Esophagus muscularis mucosa (tissue), 4 donors: ENCODE measurements at regions of chr2 and their contacts with region 1.

Region 1: DNA sequence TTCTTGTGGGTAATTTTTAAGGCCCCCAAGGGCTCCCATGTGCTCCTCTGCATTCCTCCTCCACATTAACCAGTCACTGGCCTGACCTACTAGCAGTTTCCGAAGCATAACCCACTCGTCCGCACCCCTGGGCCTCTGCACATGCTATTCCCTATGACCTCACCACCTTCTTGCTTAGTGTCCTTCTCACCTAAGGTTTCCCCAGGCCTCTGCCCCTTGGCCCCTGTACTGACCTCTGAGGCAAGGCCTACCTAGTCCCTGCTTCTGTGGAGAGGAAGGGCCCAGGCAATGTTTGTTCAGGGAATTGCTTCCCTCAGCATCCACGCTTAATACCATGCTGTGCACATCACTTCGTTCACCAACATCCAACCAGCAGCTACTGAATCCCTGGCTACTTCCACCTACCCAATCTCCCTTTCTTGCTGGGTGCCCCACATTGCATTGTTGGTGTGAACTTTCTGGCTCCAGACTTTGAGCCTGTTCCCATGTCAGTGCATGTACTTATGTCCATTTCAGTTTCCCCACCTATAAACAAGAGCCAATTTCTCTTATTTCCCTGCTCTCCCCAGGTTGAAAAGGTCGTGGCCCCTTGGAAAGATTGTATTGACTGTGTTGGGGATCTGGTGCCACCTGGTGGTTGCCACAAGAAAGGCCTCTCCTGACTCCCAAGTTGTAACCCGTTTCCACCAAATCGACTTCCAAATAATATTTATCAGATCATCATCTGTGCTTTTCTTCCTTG is 19.2 kb upstream of the TMEM177 start:
- DNase-seq: no peak
- H3K4me3 ChIP-seq: no peak overlapping the region
- H3K27ac ChIP-seq: no peak overlapping the region
- H3K4me1 ChIP-seq: no peaks in the 10 kb centered on the region
- H3K27me3 ChIP-seq: peaks cover 0 to 8% (median 0%) of the 10 kb centered on the region in 4 donors
- CTCF ChIP-seq: peak; percentile 63 to 91 (median 81)
- EP300 ChIP-seq: no peak
- POLR2A ChIP-seq: no peak

Region 2: GRCh38 chr2:119414894-119415293 is 244.9 kb before region 1 on chr2:
- intact Hi-C with region 1: loop called (anchors 5 kb)
- DNase-seq: no peak
- H3K4me3 ChIP-seq: no peak overlapping the region
- H3K27ac ChIP-seq: no peak overlapping the region
- H3K4me1 ChIP-seq: no peaks in the 10 kb centered on the region
- H3K27me3 ChIP-seq: no peaks in the 10 kb centered on the region
- CTCF ChIP-seq: no peak
- EP300 ChIP-seq: no peak
- POLR2A ChIP-seq: no peak

Region 3: GRCh38 chr2:119544075-119544938 is 115.5 kb before region 1 on chr2 and contains the start of gene CFAP221:
- intact Hi-C with region 1: no loop called
- DNase-seq: peak; percentile 89
- H3K4me3 ChIP-seq: peak within 1 kb of the TSS; percentile 55 to 64 (median 56)
- H3K27ac ChIP-seq: no peak within 1 kb of the TSS
- H3K4me1 ChIP-seq: peaks cover 6 to 25% (median 20%) of the 10 kb centered on the region in 4 donors
- H3K27me3 ChIP-seq: peaks cover 0 to 22% (median 2%) of the 10 kb centered on the region in 4 donors
- CTCF ChIP-seq: no peak
- EP300 ChIP-seq: no peak
- POLR2A ChIP-seq: no peak
- total RNA-seq, gene CFAP221: 0.17 to 0.97 (median 0.29) TPM